A549 (cell line): ENCODE measurements at regions of chr10 and their contacts with region 1.

Region 1: DNA sequence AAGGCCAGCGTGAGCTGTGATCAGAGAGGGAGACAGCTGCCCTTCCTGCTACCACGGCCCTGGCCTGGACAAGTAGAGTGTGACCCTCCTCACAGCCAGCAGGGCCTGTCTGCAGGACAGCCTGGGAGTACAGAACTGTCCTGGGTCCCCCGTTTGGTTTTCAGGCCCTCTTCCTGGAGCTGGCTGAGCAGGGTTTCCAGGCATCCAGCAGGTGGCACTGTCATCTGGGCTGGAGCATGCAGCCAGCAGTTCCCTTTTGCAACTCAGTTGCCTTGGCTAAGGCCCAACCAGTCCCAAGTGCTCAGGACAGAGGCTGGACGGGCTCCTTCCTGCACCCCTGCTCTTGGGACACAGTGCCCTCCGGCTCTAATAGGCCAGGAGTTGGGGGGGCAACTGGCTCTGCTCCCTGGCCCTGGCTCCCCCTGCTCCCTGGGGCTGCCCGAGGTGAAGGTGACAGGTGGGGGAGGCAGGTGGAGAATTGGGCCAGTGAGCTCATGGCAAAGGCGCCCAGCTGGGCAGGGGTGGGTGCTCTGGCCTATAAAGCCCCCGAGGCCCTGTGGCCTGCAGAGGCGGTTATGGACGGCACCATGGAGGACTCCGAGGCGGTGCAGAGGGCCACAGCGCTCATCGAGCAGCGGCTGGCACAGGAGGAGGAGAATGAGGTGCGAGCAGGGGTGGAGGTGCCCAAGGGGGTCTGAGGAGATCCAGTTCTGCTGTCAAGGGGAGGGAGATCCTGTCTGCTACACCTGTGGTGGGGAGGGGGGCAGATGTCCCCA is at the start of gene ANKRD2:
- DNase-seq: peak; percentile 81 to 86
- ATAC-seq: peak; percentile 72 to 79
- H3K4me3 ChIP-seq: no peak within 1 kb of the TSS
- H3K27ac ChIP-seq: peak within 1 kb of the TSS; percentile 91 to 93
- H3K4me1 ChIP-seq: peaks cover 63% of the 10 kb centered on the region
- CTCF ChIP-seq: peak; percentile 93
- EP300 ChIP-seq: no peak
- POLR2A ChIP-seq: no peak
- RAD21 ChIP-seq: peak; percentile 95 to 96
- polyA plus RNA-seq, gene ANKRD2: 0.90 and 1.5 TPM in 2 replicates

Region 2: GRCh38 chr10:97534746-97535367 is 37.5 kb before region 1 on chr10:
- CTCF ChIA-PET with region 1: interaction called, 30 read pairs
- POLR2A ChIA-PET with region 1: no interaction called
- DNase-seq: peak; percentile 61 to 67
- ATAC-seq: peak; percentile 77 to 87
- H3K4me3 ChIP-seq: no peak overlapping the region
- H3K27ac ChIP-seq: 0 out of 6 replicates have a peak overlapping the region, but pooled peaks of 1 of the 2 experiments have one; percentile 16
- H3K4me1 ChIP-seq: peaks cover 20% of the 10 kb centered on the region
- CTCF ChIP-seq: peak; percentile 59
- EP300 ChIP-seq: no peak
- POLR2A ChIP-seq: no peak
- RAD21 ChIP-seq: peak; percentile 52 to 74

Region 3: DNA sequence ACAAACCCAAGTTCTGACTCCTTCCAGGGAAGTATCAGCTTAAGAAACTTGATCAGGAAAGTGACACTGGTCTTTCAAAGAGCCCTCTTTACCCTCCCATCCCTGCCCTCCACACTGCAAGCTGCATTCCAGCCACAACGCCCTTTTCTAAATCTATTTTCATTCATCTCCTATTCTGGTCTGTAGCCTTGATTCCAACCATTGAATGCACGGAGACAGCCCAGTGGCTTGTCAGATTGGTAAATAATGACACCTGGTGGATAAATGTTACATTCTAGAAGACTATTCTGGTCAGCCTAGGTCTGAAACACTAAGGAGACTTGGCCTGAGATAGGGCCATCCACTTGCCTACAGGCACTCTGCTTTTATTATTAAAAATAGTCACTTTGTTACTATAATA is 40.0 kb after region 1 on chr10:
- CTCF ChIA-PET with region 1: interaction called, 1,048 read pairs
- POLR2A ChIA-PET with region 1: interaction called, 3 read pairs
- DNase-seq: peak; percentile 70 to 85
- ATAC-seq: peak; percentile 97 to 98
- H3K4me3 ChIP-seq: no peak overlapping the region
- H3K27ac ChIP-seq: peak overlapping the region; percentile 13 to 75; a peak in 4 of 6 replicates
- H3K4me1 ChIP-seq: peaks cover 17% of the 10 kb centered on the region; the same call in 2 of the 3 replicates
- CTCF ChIP-seq: peak; percentile 85
- EP300 ChIP-seq: no peak
- POLR2A ChIP-seq: no peak
- RAD21 ChIP-seq: peak; percentile 95 to 98

Region 4: DNA sequence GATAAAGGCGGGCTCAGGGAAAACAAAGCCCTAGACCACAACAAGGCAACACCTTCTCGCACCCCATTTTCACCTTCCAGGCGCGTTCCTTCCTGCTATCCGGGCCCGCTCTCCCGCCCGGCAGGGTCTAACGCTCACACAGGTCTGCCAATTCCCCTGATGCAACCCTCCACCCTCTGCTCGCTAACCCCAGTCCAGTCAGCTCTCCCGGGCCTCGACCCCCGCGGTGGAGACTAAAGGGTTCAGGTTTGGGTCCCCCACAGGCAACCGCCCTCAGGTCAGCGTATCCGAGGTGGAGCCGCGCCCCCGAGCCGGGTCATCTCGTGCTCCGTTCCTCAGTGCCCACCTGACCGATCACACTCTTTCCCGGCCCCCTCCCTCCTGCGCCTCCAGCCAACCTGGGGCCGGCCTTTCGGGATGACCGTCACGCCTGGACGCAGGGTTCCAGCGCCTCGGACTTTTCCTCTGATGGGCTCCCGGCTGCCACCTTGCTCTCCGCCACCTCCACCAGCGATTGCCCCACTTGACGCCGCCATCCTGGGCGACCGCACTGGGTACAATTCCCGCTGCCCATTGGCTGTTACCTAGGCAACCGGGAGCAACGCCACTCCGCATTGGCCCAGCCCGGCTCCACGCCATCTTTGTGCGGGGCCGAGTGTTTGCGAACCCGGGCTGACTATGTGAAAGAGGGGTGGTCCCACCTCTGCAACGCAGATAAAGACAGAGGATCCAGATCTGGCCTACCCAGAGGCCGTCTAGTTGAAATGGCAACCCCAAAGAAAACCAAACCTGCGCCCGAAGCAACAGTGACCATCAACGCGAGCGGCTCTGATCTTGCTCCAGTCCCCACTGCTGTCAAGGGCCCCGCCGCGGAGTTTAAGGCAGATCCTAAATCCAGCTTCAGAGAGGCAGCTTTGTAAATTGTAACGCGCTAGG is 60.8 kb after region 1 on chr10 and contains the start of gene MORN4:
- CTCF ChIA-PET with region 1: interaction called, 17 read pairs
- POLR2A ChIA-PET with region 1: no interaction called
- DNase-seq: peak; percentile 93 to 95
- ATAC-seq: peak; percentile 99
- H3K4me3 ChIP-seq: peak within 1 kb of the TSS; percentile 87
- H3K27ac ChIP-seq: peak within 1 kb of the TSS; percentile 91 to 92
- H3K4me1 ChIP-seq: peaks cover 7% of the 10 kb centered on the region; the same call in 2 of the 3 replicates
- CTCF ChIP-seq: no peak
- EP300 ChIP-seq: no peak
- POLR2A ChIP-seq: peak; percentile 60
- RAD21 ChIP-seq: no peak
- polyA plus RNA-seq, gene MORN4: 13.8 and 14.2 TPM in 2 replicates

Region 5: GRCh38 chr10:97667463-97667980 is 95.1 kb after region 1 on chr10:
- CTCF ChIA-PET with region 1: interaction called, 10 read pairs
- POLR2A ChIA-PET with region 1: no interaction called
- DNase-seq: no peak
- ATAC-seq: peak; percentile 6 to 39; a peak in 4 of 6 replicates
- H3K4me3 ChIP-seq: no peak overlapping the region
- H3K27ac ChIP-seq: no peak overlapping the region
- H3K4me1 ChIP-seq: no peaks in the 10 kb centered on the region
- CTCF ChIP-seq: no peak
- EP300 ChIP-seq: no peak
- POLR2A ChIP-seq: no peak
- RAD21 ChIP-seq: no peak

Region 6: GRCh38 chr10:97796651-97797050 is 224.2 kb after region 1 on chr10:
- CTCF ChIA-PET with region 1: no interaction called
- POLR2A ChIA-PET with region 1: no interaction called
- DNase-seq: no peak
- ATAC-seq: no peak
- H3K4me3 ChIP-seq: no peak overlapping the region
- H3K27ac ChIP-seq: no peak overlapping the region
- H3K4me1 ChIP-seq: no peaks in the 10 kb centered on the region
- CTCF ChIP-seq: no peak
- EP300 ChIP-seq: no peak
- POLR2A ChIP-seq: no peak
- RAD21 ChIP-seq: no peak